Activated CD4-positive, alpha-beta memory T cell treated with anti-CD3 and anti-CD28 coated beads, Interleukin-2, amount 10 ng/mL, durations not matched to agents 7 days and 5 days (primary cell): ENCODE measurements at regions of chr14 and their contacts with region 1.

Region 1: DNA sequence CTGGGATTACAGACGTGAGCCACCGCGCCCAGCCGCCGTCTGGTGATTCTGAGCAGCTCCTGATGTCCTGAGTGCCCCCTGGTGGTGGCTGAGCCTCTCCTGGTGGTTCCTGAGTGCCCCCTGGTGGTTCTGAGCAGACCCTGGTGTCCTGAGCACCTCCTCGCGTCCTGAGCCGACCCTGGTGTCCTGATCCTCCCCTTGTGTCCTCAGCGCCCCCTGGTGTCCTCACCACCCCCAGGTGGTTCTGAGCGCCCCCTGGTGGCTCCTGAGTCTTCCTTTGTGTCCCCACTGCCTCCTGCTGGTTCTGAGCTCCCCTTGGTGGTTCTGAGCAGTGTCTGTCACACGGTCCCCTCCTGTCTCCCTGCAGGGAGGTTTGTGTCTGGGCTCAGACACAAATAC is 1304.9 kb downstream of the TMEM121 start:
- DNase-seq: peak; percentile 62
- H3K4me3 Mint-ChIP-seq: no peak overlapping the region
- H3K27ac Mint-ChIP-seq: no peak overlapping the region
- H3K4me1 Mint-ChIP-seq: no peaks in the 10 kb centered on the region
- H3K27me3 Mint-ChIP-seq: peaks cover 40% of the 10 kb centered on the region

Region 2: DNA sequence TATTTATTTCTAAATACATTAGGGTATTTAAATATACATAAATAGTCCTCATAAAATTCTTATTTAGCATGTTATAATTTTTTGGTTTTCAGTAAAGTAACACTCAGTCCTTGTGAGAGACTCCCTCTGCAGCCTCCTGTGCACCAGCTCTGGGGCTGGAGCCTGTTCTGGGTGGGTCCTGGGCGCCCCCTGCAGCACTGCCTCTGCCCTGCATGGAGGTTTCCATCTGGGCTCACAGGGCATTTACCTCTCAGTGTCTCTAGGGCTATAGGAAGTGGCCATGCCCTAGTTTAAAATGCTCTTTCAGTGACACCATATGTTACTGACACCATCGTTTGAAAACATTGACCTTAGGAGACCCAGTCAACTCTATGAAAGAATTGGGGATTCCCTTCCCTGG is 149.8 kb before region 1 on chr14:
- CTCF ChIA-PET with region 1: interaction called, 11 read pairs
- POLR2A ChIA-PET with region 1: no interaction called
- DNase-seq: no peak
- H3K4me3 Mint-ChIP-seq: no peak overlapping the region
- H3K27ac Mint-ChIP-seq: no peak overlapping the region
- H3K4me1 Mint-ChIP-seq: no peaks in the 10 kb centered on the region
- H3K27me3 Mint-ChIP-seq: peaks cover 52% of the 10 kb centered on the region

Region 3: DNA sequence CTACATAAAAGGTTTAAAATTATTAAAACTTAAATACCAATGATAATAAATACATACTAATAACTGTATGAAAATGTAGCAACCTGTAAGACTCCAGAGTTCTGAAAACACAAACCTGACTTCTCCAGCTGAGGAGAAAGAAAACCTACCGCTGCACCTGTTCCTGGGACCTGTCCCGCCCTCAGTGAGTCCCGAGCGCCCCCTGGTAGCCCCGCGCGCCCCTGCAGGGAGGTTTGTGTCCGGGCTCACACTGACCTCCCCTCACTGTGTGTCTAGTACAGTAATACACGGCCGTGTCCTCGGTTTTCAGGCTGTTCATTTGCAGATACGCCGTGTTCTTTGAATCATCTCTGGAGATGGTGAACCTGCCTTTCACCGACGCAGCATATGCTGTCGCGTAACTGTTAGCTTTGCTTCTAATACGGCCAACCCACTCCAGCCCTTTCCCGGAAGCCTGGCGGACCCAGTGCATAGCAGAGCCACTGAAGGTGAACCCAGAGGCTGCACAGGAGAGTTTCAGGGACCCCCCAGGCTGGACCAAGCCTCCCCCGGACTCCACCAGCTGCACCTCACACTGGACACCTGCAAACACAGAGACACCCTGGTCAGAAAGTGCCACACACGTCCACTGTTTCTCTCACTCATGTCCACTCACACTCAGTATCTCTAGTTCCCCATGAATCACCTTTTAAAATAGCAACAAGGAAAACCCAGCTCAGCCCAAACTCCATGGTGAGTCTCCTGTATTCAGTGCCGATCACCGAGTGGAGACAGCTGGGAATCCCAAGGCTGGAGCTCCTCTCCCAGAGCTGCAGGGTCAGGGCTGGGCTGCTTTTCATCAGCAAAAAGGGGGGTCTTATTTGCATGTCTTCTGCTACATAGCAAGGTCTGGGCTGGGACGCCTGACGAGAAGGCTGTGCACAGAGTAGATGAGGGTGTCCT is 28.6 kb before region 1 on chr14:
- CTCF ChIA-PET with region 1: interaction called, 23 read pairs
- POLR2A ChIA-PET with region 1: no interaction called
- DNase-seq: no peak
- H3K4me3 Mint-ChIP-seq: no peak overlapping the region
- H3K27ac Mint-ChIP-seq: no peak overlapping the region
- H3K4me1 Mint-ChIP-seq: no peaks in the 10 kb centered on the region
- H3K27me3 Mint-ChIP-seq: peaks cover 66% of the 10 kb centered on the region

Region 4: DNA sequence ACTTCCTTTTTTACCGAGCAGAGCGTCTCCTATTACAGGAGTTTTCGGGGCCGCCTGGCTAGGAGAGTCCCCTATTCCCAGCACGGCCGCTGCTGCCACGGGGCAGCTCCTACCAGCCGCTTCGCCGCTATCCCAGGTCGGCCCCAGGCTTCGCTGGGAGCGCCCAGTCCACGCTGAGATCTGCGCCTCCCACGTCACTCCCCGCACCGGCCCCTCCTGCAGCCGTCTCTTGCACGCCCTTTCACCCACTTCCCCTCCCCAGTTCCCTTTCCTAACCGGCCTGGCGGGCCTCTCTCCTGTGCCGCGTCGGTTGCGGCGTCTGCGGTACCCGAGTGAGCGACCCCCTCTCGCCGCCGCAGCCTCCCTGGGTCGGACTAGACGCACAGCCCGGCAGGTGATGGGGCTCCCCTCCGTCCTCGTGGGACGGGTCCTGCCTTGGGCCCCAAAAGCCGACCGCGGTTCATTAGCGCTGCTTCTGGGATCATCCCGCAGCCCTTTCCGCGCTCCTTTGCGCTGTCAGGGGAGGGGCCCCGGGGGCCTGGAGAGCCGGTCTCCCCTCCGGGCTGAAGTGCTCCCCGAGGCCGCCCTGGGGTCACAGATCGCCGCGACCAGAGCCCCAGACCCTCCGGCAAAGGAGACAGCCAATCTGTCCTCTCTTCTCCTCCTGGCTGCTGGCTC is 13.4 kb after region 1 on chr14:
- CTCF ChIA-PET with region 1: interaction called, 85 read pairs
- POLR2A ChIA-PET with region 1: no interaction called
- DNase-seq: peak; percentile 57
- H3K4me3 Mint-ChIP-seq: peak overlapping the region; percentile 84
- H3K27ac Mint-ChIP-seq: no peak overlapping the region
- H3K4me1 Mint-ChIP-seq: peaks cover 14% of the 10 kb centered on the region
- H3K27me3 Mint-ChIP-seq: peaks cover 63% of the 10 kb centered on the region

Region 5: GRCh38 chr14:106872611-106873446 is 41.5 kb after region 1 on chr14:
- CTCF ChIA-PET with region 1: interaction called, 35 read pairs
- POLR2A ChIA-PET with region 1: no interaction called
- DNase-seq: peak; percentile 82
- H3K4me3 Mint-ChIP-seq: no peak overlapping the region
- H3K27ac Mint-ChIP-seq: no peak overlapping the region
- H3K4me1 Mint-ChIP-seq: peaks cover 16% of the 10 kb centered on the region
- H3K27me3 Mint-ChIP-seq: peaks cover 40% of the 10 kb centered on the region